MCF 10A (cell line): ENCODE measurements at regions of chr6 and their contacts with region 1.

Region 1: GRCh38 chr6:163413345-163414116 is 987 bp upstream of the QKI start:
- DNase-seq: peak; percentile 86
- H3K4me3 Mint-ChIP-seq: peak overlapping the region; percentile 78
- H3K27ac Mint-ChIP-seq: peak overlapping the region; percentile 75
- H3K4me1 Mint-ChIP-seq: peaks cover 4% of the 10 kb centered on the region
- H3K27me3 Mint-ChIP-seq: no peaks in the 10 kb centered on the region
- CTCF ChIP-seq: no peak

Region 2: GRCh38 chr6:162907876-162908481 is 505.6 kb before region 1 on chr6:
- CTCF ChIA-PET with region 1: interaction called, 3 read pairs
- POLR2A ChIA-PET with region 1: no interaction called
- intact Hi-C with region 1: loop called (anchors 1 kb)
- DNase-seq: peak; percentile 42
- H3K4me3 Mint-ChIP-seq: no peak overlapping the region
- H3K27ac Mint-ChIP-seq: no peak overlapping the region
- H3K4me1 Mint-ChIP-seq: no peaks in the 10 kb centered on the region
- H3K27me3 Mint-ChIP-seq: no peaks in the 10 kb centered on the region
- CTCF ChIP-seq: peak; percentile 33

Region 3: GRCh38 chr6:163243083-163243482 is 170.4 kb before region 1 on chr6:
- CTCF ChIA-PET with region 1: no interaction called
- POLR2A ChIA-PET with region 1: no interaction called
- intact Hi-C with region 1: no loop called
- DNase-seq: no peak
- H3K4me3 Mint-ChIP-seq: no peak overlapping the region
- H3K27ac Mint-ChIP-seq: no peak overlapping the region
- H3K4me1 Mint-ChIP-seq: no peaks in the 10 kb centered on the region
- H3K27me3 Mint-ChIP-seq: no peaks in the 10 kb centered on the region
- CTCF ChIP-seq: no peak

Region 4: GRCh38 chr6:163329991-163330390 is 83.5 kb before region 1 on chr6:
- CTCF ChIA-PET with region 1: no interaction called
- POLR2A ChIA-PET with region 1: no interaction called
- intact Hi-C with region 1: no loop called
- DNase-seq: no peak
- H3K4me3 Mint-ChIP-seq: no peak overlapping the region
- H3K27ac Mint-ChIP-seq: no peak overlapping the region
- H3K4me1 Mint-ChIP-seq: no peaks in the 10 kb centered on the region
- H3K27me3 Mint-ChIP-seq: no peaks in the 10 kb centered on the region
- CTCF ChIP-seq: no peak

Region 5: GRCh38 chr6:163354761-163355425 is 58.6 kb before region 1 on chr6:
- CTCF ChIA-PET with region 1: no interaction called
- POLR2A ChIA-PET with region 1: interaction called, 4 read pairs
- intact Hi-C with region 1: loop called (anchors 1 kb)
- DNase-seq: no peak
- H3K4me3 Mint-ChIP-seq: no peak overlapping the region
- H3K27ac Mint-ChIP-seq: no peak overlapping the region
- H3K4me1 Mint-ChIP-seq: peaks cover 20% of the 10 kb centered on the region
- H3K27me3 Mint-ChIP-seq: no peaks in the 10 kb centered on the region
- CTCF ChIP-seq: no peak

Region 6: DNA sequence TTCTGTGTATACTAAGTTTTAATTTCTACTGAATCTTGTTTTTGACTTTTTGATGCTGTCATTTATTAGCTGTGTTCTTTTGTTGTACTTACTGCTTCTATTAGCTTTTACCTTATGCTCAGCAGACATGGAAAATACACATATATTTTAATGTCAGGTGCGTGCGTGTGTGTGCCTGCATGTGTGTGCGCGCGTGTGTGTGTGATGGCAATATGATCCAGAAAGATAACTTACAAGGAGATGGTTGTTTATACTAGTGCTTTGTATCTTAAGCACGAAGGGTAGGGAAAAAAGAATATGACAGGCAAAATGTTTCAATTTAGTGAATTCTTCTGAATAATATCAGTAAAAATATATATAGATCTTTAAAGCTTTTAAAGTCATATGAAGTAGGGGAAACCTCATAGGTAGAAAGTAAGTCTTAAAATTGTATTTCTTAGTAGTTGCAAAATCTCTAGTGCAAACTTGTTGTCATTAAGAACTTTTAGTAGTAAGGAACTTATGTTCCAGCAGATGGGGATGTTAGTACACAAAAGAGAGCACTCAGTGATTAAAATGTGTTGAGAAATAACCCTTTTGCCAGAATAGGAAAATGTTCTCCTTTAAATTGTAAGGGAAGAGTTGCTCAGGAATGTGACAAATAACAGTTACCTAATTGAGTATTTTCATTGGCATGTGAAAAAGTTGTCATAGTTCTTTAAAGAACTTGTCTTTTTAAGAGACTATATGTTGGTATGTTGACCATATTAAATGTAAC is 14.1 kb after region 1 on chr6:
- CTCF ChIA-PET with region 1: interaction called, 5 read pairs
- POLR2A ChIA-PET with region 1: interaction called, 45 read pairs
- intact Hi-C with region 1: no loop called
- DNase-seq: peak; percentile 81
- H3K4me3 Mint-ChIP-seq: peak overlapping the region; percentile 43
- H3K27ac Mint-ChIP-seq: peak overlapping the region; percentile 17
- H3K4me1 Mint-ChIP-seq: peaks cover 48% of the 10 kb centered on the region
- H3K27me3 Mint-ChIP-seq: no peaks in the 10 kb centered on the region
- CTCF ChIP-seq: peak; percentile 50

Region 7: GRCh38 chr6:164927288-164928056 is 1513.9 kb after region 1 on chr6:
- CTCF ChIA-PET with region 1: interaction called, 4 read pairs
- POLR2A ChIA-PET with region 1: no interaction called
- intact Hi-C with region 1: loop called (anchors 1 kb)
- DNase-seq: peak; percentile 62
- H3K4me3 Mint-ChIP-seq: no peak overlapping the region
- H3K27ac Mint-ChIP-seq: no peak overlapping the region
- H3K4me1 Mint-ChIP-seq: no peaks in the 10 kb centered on the region
- H3K27me3 Mint-ChIP-seq: no peaks in the 10 kb centered on the region
- CTCF ChIP-seq: peak; percentile 95

Region 8: DNA sequence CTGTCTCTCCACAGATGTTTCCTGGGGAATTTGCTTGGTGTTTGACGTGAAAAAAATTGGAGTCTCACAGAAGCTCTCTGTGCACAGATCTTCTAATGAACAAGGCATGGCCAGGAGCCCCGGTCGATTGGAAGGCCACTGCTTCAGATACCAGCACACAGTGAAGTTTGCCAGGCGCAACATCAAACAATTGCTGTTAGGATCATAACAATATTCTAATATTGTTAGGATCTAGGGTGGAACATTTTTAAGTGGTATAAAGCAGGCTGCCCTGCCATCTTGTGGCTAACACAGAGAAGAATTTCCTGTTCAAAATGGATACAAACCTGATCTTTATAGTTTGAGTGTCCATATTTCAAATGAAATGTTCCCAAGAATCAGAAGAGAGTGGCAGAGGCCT is 1831.8 kb after region 1 on chr6:
- CTCF ChIA-PET with region 1: interaction called, 3 read pairs
- POLR2A ChIA-PET with region 1: no interaction called
- intact Hi-C with region 1: loop called (anchors 5 kb)
- DNase-seq: peak; percentile 55
- H3K4me3 Mint-ChIP-seq: no peak overlapping the region
- H3K27ac Mint-ChIP-seq: peak overlapping the region; percentile 20
- H3K4me1 Mint-ChIP-seq: peaks cover 6% of the 10 kb centered on the region
- H3K27me3 Mint-ChIP-seq: no peaks in the 10 kb centered on the region
- CTCF ChIP-seq: peak; percentile 50